ENCODE measurements at regions of chr11 and their contacts with region 1.

Region 1: GRCh38 chr11:122179961-122180834 is 64.2 kb upstream of the BLID start:
- DNase-seq: peak; percentile 99
- ATAC-seq: peak; percentile 79
- H3K4me3 ChIP-seq: peak overlapping the region; percentile 78
- H3K27ac ChIP-seq: peak overlapping the region; percentile 99
- H3K4me1 ChIP-seq: peaks cover 49% of the 10 kb centered on the region
- H3K27me3 ChIP-seq: no peaks in the 10 kb centered on the region
- CTCF ChIP-seq: no peak

Region 2: DNA sequence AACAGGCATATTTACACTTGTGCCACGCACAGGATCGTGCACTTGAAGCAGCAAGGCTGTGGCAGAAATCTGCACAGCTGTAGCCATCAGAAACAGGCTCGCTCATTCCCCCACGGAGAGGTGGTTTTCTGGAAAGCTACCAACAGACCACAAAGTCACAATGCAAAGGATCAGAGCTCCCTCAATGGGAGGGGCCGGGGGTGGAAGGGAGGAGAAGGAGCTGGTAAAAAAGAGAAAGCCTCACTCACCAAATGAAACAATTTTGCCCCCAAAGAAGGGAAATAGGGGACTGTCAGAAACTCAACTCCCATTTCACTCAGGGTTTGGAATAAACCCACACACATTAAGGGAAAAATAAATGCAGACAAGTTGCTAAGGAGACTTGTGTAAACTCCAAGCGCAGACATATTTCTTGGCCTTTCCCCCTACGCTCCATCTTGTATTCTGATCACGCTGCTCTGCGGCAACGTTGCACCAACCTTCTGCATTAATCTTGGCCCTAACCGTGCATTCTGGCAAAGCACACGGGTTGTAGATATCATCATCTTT is 21.0 kb before region 1 on chr11:
- CTCF ChIA-PET with region 1: no interaction called
- POLR2A ChIA-PET with region 1: interaction called, 18 read pairs
- intact Hi-C with region 1: loop called (anchors 1 kb)
- DNase-seq: peak; percentile 75
- ATAC-seq: peak; percentile 14
- H3K4me3 ChIP-seq: peak overlapping the region; percentile 75
- H3K27ac ChIP-seq: peak overlapping the region; percentile 99
- H3K4me1 ChIP-seq: peaks cover 70% of the 10 kb centered on the region
- H3K27me3 ChIP-seq: no peaks in the 10 kb centered on the region
- CTCF ChIP-seq: no peak

Region 3: GRCh38 chr11:122197055-122197987 is 17.1 kb after region 1 on chr11:
- CTCF ChIA-PET with region 1: interaction called, 5 read pairs
- POLR2A ChIA-PET with region 1: interaction called, 29 read pairs
- intact Hi-C with region 1: loop called (anchors 1 kb)
- DNase-seq: peak; percentile 100
- ATAC-seq: peak; percentile 75
- H3K4me3 ChIP-seq: peak overlapping the region; percentile 17
- H3K27ac ChIP-seq: peak overlapping the region; percentile 94
- H3K4me1 ChIP-seq: peaks cover 80% of the 10 kb centered on the region
- H3K27me3 ChIP-seq: no peaks in the 10 kb centered on the region
- CTCF ChIP-seq: no peak

Region 4: GRCh38 chr11:122578168-122578825 is 398.1 kb after region 1 on chr11:
- CTCF ChIA-PET with region 1: no interaction called
- POLR2A ChIA-PET with region 1: interaction called, 17 read pairs
- intact Hi-C with region 1: no loop called
- DNase-seq: peak; percentile 25
- ATAC-seq: no peak
- H3K4me3 ChIP-seq: no peak overlapping the region
- H3K27ac ChIP-seq: no peak overlapping the region
- H3K4me1 ChIP-seq: peaks cover 12% of the 10 kb centered on the region
- H3K27me3 ChIP-seq: no peaks in the 10 kb centered on the region
- CTCF ChIP-seq: peak; percentile 44; the same call in 1 of the 2 replicates

Region 5: GRCh38 chr11:123469089-123469488 is 1288.9 kb after region 1 on chr11:
- CTCF ChIA-PET with region 1: no interaction called
- POLR2A ChIA-PET with region 1: interaction called, 17 read pairs
- intact Hi-C with region 1: no loop called
- DNase-seq: no peak
- ATAC-seq: no peak; the same call in 1 of the 2 replicates
- H3K4me3 ChIP-seq: no peak overlapping the region
- H3K27ac ChIP-seq: peak overlapping the region; percentile 95
- H3K4me1 ChIP-seq: peaks cover 31% of the 10 kb centered on the region
- H3K27me3 ChIP-seq: no peaks in the 10 kb centered on the region
- CTCF ChIP-seq: no peak

Measured in PC-3 (cell line).